ENCODE measurements at regions of chr20 and their contacts with region 1.

Region 1: DNA sequence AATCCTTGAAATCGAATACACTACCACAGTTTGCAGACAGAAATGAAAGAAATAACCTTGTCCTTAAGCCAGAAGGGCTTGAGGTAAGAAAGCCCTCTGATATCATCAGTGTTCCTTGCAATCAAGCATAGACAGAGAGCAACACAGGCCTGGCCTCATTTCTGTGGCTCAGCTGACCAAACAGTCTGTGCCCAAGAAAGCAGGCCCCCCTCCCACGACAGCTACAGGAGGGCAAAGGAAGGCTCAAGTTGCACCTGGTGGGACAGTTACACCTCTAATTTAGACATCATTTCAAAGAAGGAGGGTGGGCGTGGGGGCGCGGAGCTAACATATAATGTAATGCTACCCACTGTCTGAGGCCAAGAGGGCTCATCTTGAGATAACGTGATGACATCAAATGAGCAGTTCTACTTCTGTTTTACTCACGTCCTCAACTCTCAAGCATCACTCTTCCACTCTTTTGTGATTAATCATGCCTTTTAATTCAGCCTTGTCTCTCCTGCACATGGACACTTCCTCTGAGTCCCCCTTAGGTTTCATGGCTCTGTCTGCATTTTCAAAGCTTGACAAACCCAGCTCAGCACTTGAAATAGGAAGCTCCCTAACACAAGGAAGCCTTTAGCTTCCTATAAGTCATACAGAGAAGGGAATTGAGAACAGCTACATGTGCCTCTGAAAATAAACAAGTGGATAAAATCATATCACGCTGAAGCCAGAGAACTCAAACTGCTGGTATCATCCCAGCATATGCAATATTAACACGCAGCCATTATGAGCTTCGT is 21.4 kb downstream of the KIF16B start:
- DNase-seq: no peak
- H3K4me3 ChIP-seq: no peak overlapping the region
- H3K27me3 ChIP-seq: no peaks in the 10 kb centered on the region
- CTCF ChIP-seq: no peak

Region 2: GRCh38 chr20:16517946-16518783 is 33.7 kb before region 1 on chr20:
- CTCF ChIA-PET with region 1: no interaction called
- POLR2A ChIA-PET with region 1: interaction called, 12 read pairs
- DNase-seq: no peak
- H3K4me3 ChIP-seq: no peak overlapping the region
- H3K27me3 ChIP-seq: no peaks in the 10 kb centered on the region
- CTCF ChIP-seq: peak; percentile 59

Measured in BJ (cell line).